HCT116 (cell line): ENCODE measurements at regions of chr14 and their contacts with region 1.

Region 1: GRCh38 chr14:24114536-24115450 is at the starts of genes DCAF11 and NRL:
- DNase-seq: peak; percentile 100
- ATAC-seq: peak; percentile 89
- H3K4me3 ChIP-seq: peak within 1 kb of the TSS; percentile 86 to 92
- H3K27ac ChIP-seq: peak within 1 kb of the TSS; percentile 97
- H3K4me1 ChIP-seq: peaks cover 6 to 16% of the 10 kb centered on the region in 2 experiments; a peak in 3 of 4 replicates
- H3K27me3 ChIP-seq: no peaks in the 10 kb centered on the region
- CTCF ChIP-seq: no peak
- POLR2A ChIP-seq: peak; percentile 2
- RAD21 ChIP-seq: no peak
- total RNA-seq, gene DCAF11: 47.5 TPM
- total RNA-seq, gene NRL: 0.66 TPM

Region 2: DNA sequence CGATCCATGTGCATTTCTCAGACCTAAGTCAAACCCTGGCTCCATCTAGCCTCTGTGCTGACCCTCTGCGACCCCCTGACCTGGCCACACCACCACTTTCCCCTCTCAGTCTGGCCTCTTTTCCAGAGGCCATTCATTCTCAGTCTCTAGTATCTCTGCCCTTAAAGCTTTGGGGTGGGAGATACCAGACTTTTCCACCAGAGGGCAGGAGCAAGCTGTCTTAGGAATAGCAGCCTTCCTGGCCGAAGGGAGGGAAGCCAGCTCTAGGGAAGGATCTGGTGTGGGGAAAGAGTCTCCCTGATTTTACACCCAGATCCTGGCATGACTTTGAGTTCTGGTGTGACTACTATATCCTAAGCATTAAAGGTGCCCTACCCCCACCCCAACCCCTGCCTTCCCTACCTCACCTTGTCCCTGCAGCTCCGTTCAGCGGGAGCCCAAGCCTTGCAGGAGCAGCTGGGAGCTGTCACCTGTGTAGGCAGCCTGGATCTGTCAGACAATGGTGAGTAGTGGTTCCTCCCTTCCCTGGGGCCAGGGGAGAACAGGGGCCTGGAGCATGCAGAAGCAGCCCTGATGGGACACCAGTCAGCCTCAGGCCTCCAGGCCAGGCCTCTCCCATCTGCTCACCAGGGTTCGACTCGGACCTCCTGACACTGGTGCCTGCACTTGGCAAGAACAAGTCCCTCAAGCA is 56.4 kb before region 1 on chr14:
- CTCF ChIA-PET with region 1: interaction called, 116 read pairs
- POLR2A ChIA-PET with region 1: interaction called, 7 read pairs
- RAD21 ChIA-PET with region 1: interaction called in 1 of 2 experiments, 18 read pairs
- intact Hi-C with region 1: loop called (anchors 1 kb)
- DNase-seq: no peak
- ATAC-seq: peak; percentile 92
- H3K4me3 ChIP-seq: no peak overlapping the region
- H3K27ac ChIP-seq: no peak overlapping the region
- H3K4me1 ChIP-seq: peaks cover 0 to 3% of the 10 kb centered on the region in 2 experiments; a peak in 1 of 4 replicates
- H3K27me3 ChIP-seq: no peaks in the 10 kb centered on the region
- CTCF ChIP-seq: peak; percentile 72 to 89 (median 87); a peak in 5 of 6 replicates
- POLR2A ChIP-seq: no peak
- RAD21 ChIP-seq: peak; percentile 95

Region 3: DNA sequence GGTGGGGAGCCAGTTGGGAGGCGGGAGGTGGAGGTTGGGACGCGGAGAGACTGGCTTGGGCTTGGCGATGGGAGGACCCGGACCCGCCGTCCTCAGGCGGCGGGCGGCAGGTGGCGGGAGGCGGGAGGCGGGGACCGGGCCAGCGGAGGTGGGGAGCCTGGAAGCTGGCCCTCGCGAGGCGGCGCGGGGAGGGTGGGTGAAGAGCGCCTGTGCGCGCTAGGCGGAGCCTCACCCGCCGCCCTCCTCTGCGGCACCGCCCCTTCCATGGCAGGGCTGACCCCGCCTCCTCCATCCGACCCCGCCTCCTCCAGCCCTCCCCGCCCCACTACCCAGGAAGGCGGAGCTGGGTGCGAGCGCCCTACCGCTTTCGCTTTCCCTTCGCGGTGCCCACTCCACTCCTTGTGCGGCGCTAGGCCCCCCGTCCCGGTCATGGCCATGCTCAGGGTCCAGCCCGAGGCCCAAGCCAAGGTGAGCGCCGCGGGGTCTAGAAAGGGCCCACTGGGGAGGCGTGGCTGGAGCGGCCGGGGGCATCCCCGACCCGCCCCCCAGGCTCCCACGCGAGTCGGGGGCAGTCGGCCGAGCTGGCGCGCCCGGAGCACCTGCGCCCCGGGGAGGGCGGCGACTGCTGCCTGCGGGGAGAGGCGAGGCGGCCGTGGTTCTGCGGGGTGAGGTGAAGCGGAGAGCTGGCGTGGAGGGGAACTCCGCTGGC is 21.2 kb after region 1 on chr14 and contains the start of gene PSME1:
- CTCF ChIA-PET with region 1: interaction called, 11 read pairs
- POLR2A ChIA-PET with region 1: interaction called, 36 read pairs
- RAD21 ChIA-PET with region 1: interaction called, 5 to 10 read pairs
- intact Hi-C with region 1: no loop called
- DNase-seq: peak; percentile 71
- ATAC-seq: peak; percentile 92
- H3K4me3 ChIP-seq: peak within 1 kb of the TSS; percentile 71 to 94
- H3K27ac ChIP-seq: peak within 1 kb of the TSS; percentile 96
- H3K4me1 ChIP-seq: peaks cover 20 to 38% of the 10 kb centered on the region in 2 experiments
- H3K27me3 ChIP-seq: no peaks in the 10 kb centered on the region
- CTCF ChIP-seq: no peak
- POLR2A ChIP-seq: peak; percentile 70
- RAD21 ChIP-seq: no peak
- total RNA-seq, gene PSME1: 174 TPM

Region 4: GRCh38 chr14:24141097-24141880 is 26.5 kb after region 1 on chr14 and contains the start of gene EMC9:
- CTCF ChIA-PET with region 1: interaction called, 11 read pairs
- POLR2A ChIA-PET with region 1: interaction called, 36 read pairs
- RAD21 ChIA-PET with region 1: interaction called, 5 to 10 read pairs
- intact Hi-C with region 1: loop called (anchors 1 kb)
- DNase-seq: peak; percentile 99
- ATAC-seq: peak; percentile 88
- H3K4me3 ChIP-seq: peak within 1 kb of the TSS; percentile 66 to 87
- H3K27ac ChIP-seq: peak within 1 kb of the TSS; percentile 91
- H3K4me1 ChIP-seq: peaks cover 26 to 50% of the 10 kb centered on the region in 2 experiments
- H3K27me3 ChIP-seq: no peaks in the 10 kb centered on the region
- CTCF ChIP-seq: peak in 1 of 3 experiments; percentile 62; a peak in 3 of 6 replicates
- POLR2A ChIP-seq: peak; percentile 96
- RAD21 ChIP-seq: no peak
- total RNA-seq, gene EMC9: 42.0 TPM

Region 5: DNA sequence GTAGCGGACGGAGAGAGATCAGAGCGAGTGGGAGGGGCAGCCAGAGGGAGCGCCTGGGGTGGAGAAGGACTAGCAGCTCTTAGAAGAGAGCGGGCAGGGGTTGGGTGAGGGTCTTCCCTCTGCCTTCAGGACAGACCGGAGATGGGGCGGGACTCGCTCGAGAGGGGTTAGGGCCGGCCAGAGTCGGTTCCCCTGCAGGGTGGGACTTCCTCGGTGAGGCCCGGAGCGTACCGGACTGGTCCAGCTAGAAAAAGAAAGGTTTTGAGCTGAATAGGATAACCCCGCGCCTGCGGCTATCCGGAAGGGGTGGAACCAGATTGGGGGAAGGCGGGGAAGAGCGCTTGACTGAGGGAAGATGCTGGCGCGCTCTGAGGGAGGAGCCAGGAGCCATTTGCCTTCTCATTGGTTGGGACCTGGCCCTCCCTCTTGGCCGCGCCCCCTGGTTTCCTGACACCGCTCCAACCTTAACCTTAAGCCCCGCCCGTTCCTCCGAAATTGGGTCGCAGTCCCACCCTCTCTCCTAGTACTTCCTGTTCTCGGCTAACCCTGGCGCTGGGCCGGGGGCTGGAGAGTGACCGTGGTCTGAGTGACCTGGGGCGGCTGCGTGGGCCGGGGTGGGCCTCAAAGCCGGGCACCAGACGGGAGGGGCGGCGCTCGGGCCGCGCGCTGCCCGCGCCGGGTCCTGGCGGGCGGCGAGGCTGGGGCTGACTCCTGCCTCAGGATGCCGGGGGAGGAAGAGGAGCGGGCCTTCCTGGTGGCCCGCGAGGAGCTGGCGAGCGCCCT is 32.4 kb after region 1 on chr14 and contains the start of gene RNF31:
- CTCF ChIA-PET with region 1: interaction called, 3 read pairs
- POLR2A ChIA-PET with region 1: interaction called, 22 read pairs
- RAD21 ChIA-PET with region 1: no interaction called
- intact Hi-C with region 1: loop called (anchors 1 kb)
- DNase-seq: peak; percentile 96
- ATAC-seq: peak; percentile 88
- H3K4me3 ChIP-seq: peak within 1 kb of the TSS; percentile 97 to 99
- H3K27ac ChIP-seq: peak within 1 kb of the TSS; percentile 95
- H3K4me1 ChIP-seq: peaks cover 17 to 23% of the 10 kb centered on the region in 2 experiments
- H3K27me3 ChIP-seq: no peaks in the 10 kb centered on the region
- CTCF ChIP-seq: no peak
- POLR2A ChIP-seq: no peak
- RAD21 ChIP-seq: no peak
- total RNA-seq, gene RNF31: 78.0 TPM

Region 6: GRCh38 chr14:24160850-24161804 is 46.3 kb after region 1 on chr14 and contains the start of gene IRF9:
- CTCF ChIA-PET with region 1: interaction called, 6 read pairs
- POLR2A ChIA-PET with region 1: interaction called, 11 read pairs
- RAD21 ChIA-PET with region 1: no interaction called
- intact Hi-C with region 1: loop called (anchors 2 kb)
- DNase-seq: peak; percentile 89
- ATAC-seq: peak; percentile 95
- H3K4me3 ChIP-seq: peak within 1 kb of the TSS; percentile 58 to 60
- H3K27ac ChIP-seq: peak within 1 kb of the TSS; percentile 84
- H3K4me1 ChIP-seq: peaks cover 15 to 21% of the 10 kb centered on the region in 2 experiments
- H3K27me3 ChIP-seq: no peaks in the 10 kb centered on the region
- CTCF ChIP-seq: peak; percentile 77 to 94 (median 87)
- POLR2A ChIP-seq: peak; percentile 53
- RAD21 ChIP-seq: peak; percentile 85
- total RNA-seq, gene IRF9: 21.7 TPM

Region 7: DNA sequence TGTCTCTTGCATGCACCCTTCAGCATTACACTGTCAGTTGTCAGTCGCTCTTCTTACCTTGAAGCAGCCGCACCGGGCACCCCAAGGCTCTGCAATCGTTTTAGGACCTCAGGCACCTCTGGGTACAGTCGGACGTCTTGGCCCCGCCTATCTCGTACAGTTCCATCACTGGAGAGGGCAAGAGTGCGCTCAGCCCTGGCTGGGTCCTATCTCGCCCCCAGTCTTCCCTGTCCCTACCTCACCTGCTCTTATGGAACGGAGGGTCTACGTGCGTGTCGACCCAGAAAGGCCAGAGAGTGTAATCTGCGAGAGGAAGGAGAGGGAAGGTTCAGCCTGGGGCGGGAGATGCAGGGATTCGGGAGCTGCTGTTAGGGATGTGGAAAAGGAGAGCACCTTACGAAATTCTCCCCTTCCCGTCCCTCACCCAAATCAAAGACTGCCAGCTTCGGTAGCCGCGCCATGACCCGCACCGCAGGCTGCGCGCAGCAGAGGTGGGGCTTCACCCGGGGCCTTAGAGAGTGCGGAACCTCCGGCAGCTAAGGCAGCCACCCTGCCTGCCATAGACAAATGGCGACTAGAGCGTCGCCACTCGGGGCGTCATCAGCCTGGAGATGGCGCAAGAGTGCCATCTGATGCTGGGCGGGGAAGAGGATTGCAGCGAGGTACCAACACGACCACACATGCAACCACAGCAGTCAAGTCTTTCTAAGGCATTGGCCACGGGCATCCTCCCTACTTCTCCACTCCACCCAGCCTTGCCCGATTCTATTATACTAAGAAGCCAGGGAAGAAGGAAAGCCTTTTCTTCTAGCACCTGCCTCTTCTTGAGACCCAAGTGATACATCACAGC is 100.9 kb after region 1 on chr14 and contains the start of gene MDP1:
- CTCF ChIA-PET with region 1: no interaction called
- POLR2A ChIA-PET with region 1: no interaction called
- RAD21 ChIA-PET with region 1: no interaction called
- intact Hi-C with region 1: loop called (anchors 5 kb)
- DNase-seq: peak; percentile 78
- ATAC-seq: peak; percentile 72
- H3K4me3 ChIP-seq: peak within 1 kb of the TSS; percentile 87 to 97
- H3K27ac ChIP-seq: peak within 1 kb of the TSS; percentile 88
- H3K4me1 ChIP-seq: peaks cover 22 to 29% of the 10 kb centered on the region in 2 experiments
- H3K27me3 ChIP-seq: no peaks in the 10 kb centered on the region
- CTCF ChIP-seq: peak; percentile 23 to 64 (median 40); a peak in 3 of 6 replicates
- POLR2A ChIP-seq: peak; percentile 75
- RAD21 ChIP-seq: peak; percentile 61
- total RNA-seq, gene MDP1: 15.9 TPM